ENCODE measurements at regions of chr5 and their contacts with region 1.

Region 1: GRCh38 chr5:175873088-175873454 is 1.7 kb downstream of the CPLX2 start:
- DNase-seq: peak; percentile 37
- ATAC-seq: peak; percentile 35
- H3K4me3 ChIP-seq: peak overlapping the region; percentile 10 to 48 (median 41); a peak in 4 of 6 replicates
- H3K27ac ChIP-seq: no peak overlapping the region
- H3K4me1 ChIP-seq: peaks cover 80% of the 10 kb centered on the region
- H3K27me3 ChIP-seq: no peaks in the 10 kb centered on the region
- CTCF ChIP-seq: peak; percentile 72
- EP300 ChIP-seq: no peak
- POLR2A ChIP-seq: no peak
- RAD21 ChIP-seq: peak; percentile 47; the same call in 1 of the 2 replicates

Region 2: DNA sequence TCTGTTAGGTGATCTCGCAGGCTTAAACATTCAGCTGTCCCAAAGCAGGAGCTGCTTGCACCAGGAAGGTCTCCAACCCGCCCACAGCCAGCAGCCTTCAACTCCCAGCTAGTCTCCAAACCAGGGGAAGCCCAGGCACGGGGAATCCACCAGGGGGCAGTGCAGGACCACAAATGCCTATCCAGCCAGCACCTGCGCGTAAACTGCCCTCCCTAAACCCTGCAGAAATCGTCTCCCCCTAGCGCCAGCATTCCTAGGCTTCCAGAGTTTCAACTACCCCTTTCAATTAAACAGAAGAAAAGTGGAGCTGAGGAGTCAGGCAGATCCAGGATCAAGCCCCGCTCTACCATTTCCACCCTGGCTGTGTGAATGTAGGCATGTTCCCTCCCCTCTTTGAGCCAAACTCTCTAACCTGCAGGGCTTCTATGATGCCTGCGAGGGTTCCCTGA is 143.2 kb before region 1 on chr5:
- CTCF ChIA-PET with region 1: interaction called, 17 read pairs
- POLR2A ChIA-PET with region 1: no interaction called
- in situ Hi-C with region 1: loop called (anchors 5 kb)
- intact Hi-C with region 1: loop called (anchors 2 kb)
- DNase-seq: peak; percentile 83
- ATAC-seq: peak; percentile 97
- H3K4me3 ChIP-seq: peak overlapping the region in 1 of 3 experiments; percentile 23; a peak in 1 of 6 replicates
- H3K27ac ChIP-seq: no peak overlapping the region
- H3K4me1 ChIP-seq: peaks cover 11% of the 10 kb centered on the region; the same call in 1 of the 2 replicates
- H3K27me3 ChIP-seq: 0 out of 5 replicates have a peak, but pooled peaks cover 1 to 3% of the 10 kb centered on the region in 2 experiments
- CTCF ChIP-seq: peak; percentile 99
- EP300 ChIP-seq: no peak
- POLR2A ChIP-seq: no peak
- RAD21 ChIP-seq: peak; percentile 99

Region 3: GRCh38 chr5:175796536-175797499 is 76.3 kb before region 1 on chr5:
- CTCF ChIA-PET with region 1: interaction called, 4 read pairs
- POLR2A ChIA-PET with region 1: interaction called, 9 read pairs
- in situ Hi-C with region 1: loop called (anchors 5 kb)
- intact Hi-C with region 1: loop called (anchors 1 kb)
- DNase-seq: peak; percentile 68
- ATAC-seq: peak; percentile 98
- H3K4me3 ChIP-seq: peak overlapping the region; percentile 47 to 73 (median 50)
- H3K27ac ChIP-seq: no peak overlapping the region
- H3K4me1 ChIP-seq: peaks cover 18% of the 10 kb centered on the region
- H3K27me3 ChIP-seq: peaks cover 0 to 7% of the 10 kb centered on the region in 2 experiments; a peak in 1 of 5 replicates
- CTCF ChIP-seq: peak; percentile 57
- EP300 ChIP-seq: peak in 1 of 2 experiments; percentile 32; a peak in 1 of 4 replicates
- POLR2A ChIP-seq: no peak
- RAD21 ChIP-seq: peak; percentile 91

Region 4: GRCh38 chr5:175840050-175840841 is 32.8 kb before region 1 on chr5:
- CTCF ChIA-PET with region 1: interaction called, 6 read pairs
- POLR2A ChIA-PET with region 1: interaction called, 4 read pairs
- in situ Hi-C with region 1: no loop called
- intact Hi-C with region 1: loop called (anchors 1 kb)
- DNase-seq: peak; percentile 39
- ATAC-seq: no peak
- H3K4me3 ChIP-seq: no peak overlapping the region
- H3K27ac ChIP-seq: no peak overlapping the region
- H3K4me1 ChIP-seq: peaks cover 46% of the 10 kb centered on the region
- H3K27me3 ChIP-seq: no peaks in the 10 kb centered on the region
- CTCF ChIP-seq: peak; percentile 59
- EP300 ChIP-seq: no peak
- POLR2A ChIP-seq: no peak
- RAD21 ChIP-seq: 0 out of 2 replicates have a peak, but pooled peaks have one; percentile 29

Region 5: DNA sequence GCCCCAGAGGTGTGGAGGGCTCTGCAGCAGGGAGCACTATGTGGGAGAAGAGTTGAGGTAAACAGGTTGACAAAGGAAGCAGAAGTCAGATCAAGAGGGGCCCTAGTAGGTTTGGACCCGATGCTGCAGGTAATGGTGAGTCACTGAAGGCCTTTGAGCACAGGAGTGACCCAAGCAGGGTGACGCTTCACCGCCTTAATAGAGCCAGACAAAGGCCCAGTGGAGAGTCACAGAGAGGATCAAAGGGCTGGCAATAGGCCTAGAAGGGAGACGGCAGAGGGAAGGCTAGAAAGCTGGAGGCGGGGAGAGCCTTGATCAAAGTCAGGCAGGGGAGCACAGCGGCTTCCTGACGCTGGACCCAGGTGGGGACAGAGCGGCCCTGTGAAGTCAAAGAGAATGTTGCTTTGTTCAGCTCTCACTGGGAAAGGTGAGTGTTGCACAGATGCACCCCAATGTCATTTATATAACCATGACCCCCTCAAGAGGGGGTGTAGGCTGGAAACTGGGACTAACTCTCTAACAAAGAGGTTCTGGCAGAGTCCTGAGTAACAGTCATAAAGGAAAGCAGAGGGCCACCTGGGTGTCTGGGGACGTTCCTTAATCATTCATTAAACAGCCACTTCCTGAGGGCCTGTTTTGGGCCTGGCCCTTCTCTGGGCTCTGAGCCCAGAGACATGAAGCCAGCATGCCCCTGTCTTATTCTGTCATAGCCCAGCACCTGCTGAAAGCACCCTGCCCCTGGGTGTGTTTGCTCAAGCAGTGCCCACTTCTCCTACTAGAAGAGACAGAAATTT is 11.5 kb before region 1 on chr5:
- CTCF ChIA-PET with region 1: no interaction called
- POLR2A ChIA-PET with region 1: interaction called, 12 read pairs
- in situ Hi-C with region 1: no loop called
- intact Hi-C with region 1: no loop called
- DNase-seq: peak; percentile 100
- ATAC-seq: peak; percentile 95
- H3K4me3 ChIP-seq: peak overlapping the region in 1 of 3 experiments; percentile 40; a peak in 2 of 6 replicates
- H3K27ac ChIP-seq: peak overlapping the region; percentile 99
- H3K4me1 ChIP-seq: peaks cover 88% of the 10 kb centered on the region
- H3K27me3 ChIP-seq: no peaks in the 10 kb centered on the region
- CTCF ChIP-seq: 0 out of 2 replicates have a peak, but pooled peaks have one; percentile 10
- EP300 ChIP-seq: peak; percentile 84 to 98; a peak in 3 of 4 replicates
- POLR2A ChIP-seq: no peak; a peak in 1 of 4 replicates
- RAD21 ChIP-seq: no peak; the same call in 1 of the 2 replicates

Region 6: GRCh38 chr5:176152191-176152929 is 279.3 kb after region 1 on chr5:
- CTCF ChIA-PET with region 1: no interaction called
- POLR2A ChIA-PET with region 1: no interaction called
- in situ Hi-C with region 1: no loop called
- intact Hi-C with region 1: no loop called
- DNase-seq: no peak
- ATAC-seq: no peak
- H3K4me3 ChIP-seq: no peak overlapping the region
- H3K27ac ChIP-seq: no peak overlapping the region
- H3K4me1 ChIP-seq: no peaks in the 10 kb centered on the region
- H3K27me3 ChIP-seq: peaks cover 0 to 18% of the 10 kb centered on the region in 2 experiments; a peak in 3 of 5 replicates
- CTCF ChIP-seq: no peak
- EP300 ChIP-seq: no peak
- POLR2A ChIP-seq: no peak
- RAD21 ChIP-seq: no peak

Region 7: DNA sequence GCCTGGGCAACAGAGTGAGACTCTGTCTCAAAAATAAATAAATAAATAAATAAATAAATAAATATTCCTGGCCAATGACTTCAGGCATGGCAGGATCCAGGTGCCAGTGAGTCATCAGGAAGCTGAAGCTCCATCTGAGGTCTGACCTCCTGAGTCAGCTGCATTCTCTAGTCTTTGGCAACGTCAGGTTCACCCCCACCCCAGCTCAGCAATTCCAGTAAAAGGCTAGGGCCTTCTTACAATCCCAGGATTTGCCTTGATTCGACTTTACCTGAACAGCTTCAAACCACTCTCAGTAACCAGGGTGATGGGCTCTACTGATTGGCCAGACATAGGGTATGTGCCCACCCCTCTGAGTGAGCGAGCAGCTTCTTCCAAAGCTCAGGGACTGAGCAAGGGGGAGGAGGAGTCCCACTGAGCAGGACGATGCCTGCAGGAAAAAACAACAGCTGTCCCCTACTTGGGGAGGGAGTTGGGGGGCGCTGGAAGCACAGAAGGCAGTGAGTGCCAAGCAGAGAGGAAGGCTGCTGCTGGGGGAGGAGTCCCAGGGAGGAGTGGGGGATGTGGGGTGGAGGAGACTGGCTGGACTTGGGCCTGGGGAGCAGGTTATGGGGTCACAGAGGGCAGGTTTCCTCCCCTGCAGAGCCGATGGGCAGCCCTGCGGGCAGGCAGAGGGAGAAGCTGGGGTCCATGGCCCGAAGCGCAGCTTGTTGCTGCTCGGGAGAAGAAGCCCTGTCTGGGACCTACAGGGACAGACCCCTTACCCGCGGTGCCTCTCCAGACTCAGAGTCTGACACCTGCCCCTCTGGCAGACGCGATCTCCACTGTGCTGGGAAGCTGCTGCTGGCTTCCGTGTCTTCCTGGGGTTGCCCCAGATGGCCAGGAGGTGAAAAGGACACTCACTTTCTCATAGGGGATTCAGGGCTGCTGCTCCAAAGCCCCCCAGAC is 911.4 kb after region 1 on chr5:
- CTCF ChIA-PET with region 1: no interaction called
- POLR2A ChIA-PET with region 1: no interaction called
- in situ Hi-C with region 1: no loop called
- intact Hi-C with region 1: no loop called
- DNase-seq: peak; percentile 15
- ATAC-seq: no peak
- H3K4me3 ChIP-seq: no peak overlapping the region
- H3K27ac ChIP-seq: no peak overlapping the region
- H3K4me1 ChIP-seq: peaks cover 13% of the 10 kb centered on the region
- H3K27me3 ChIP-seq: peaks cover 15 to 61% of the 10 kb centered on the region in 2 experiments; a peak in 4 of 5 replicates
- CTCF ChIP-seq: no peak
- EP300 ChIP-seq: no peak
- POLR2A ChIP-seq: no peak
- RAD21 ChIP-seq: no peak